CD14-positive monocyte (primary cell): ENCODE measurements at regions of chr19 and their contacts with region 1.

Region 1: GRCh38 chr19:41144403-41144802 is 30.2 kb downstream of the CYP2F1 start:
- DNase-seq: peak; percentile 73 to 82 (median 78)
- H3K4me3 ChIP-seq: no peak overlapping the region
- H3K4me3 Mint-ChIP-seq: no peak overlapping the region
- H3K27ac ChIP-seq: no peak overlapping the region
- H3K27ac Mint-ChIP-seq: no peak overlapping the region
- H3K4me1 ChIP-seq: no peaks in the 10 kb centered on the region
- H3K4me1 Mint-ChIP-seq: peaks cover 2% of the 10 kb centered on the region
- H3K27me3 ChIP-seq: peaks cover 0 to 2% of the 10 kb centered on the region in 2 donors
- H3K27me3 Mint-ChIP-seq: peaks cover 5 to 17% (median 15%) of the 10 kb centered on the region in 3 donors
- CTCF ChIP-seq: peak; percentile 82

Region 2: DNA sequence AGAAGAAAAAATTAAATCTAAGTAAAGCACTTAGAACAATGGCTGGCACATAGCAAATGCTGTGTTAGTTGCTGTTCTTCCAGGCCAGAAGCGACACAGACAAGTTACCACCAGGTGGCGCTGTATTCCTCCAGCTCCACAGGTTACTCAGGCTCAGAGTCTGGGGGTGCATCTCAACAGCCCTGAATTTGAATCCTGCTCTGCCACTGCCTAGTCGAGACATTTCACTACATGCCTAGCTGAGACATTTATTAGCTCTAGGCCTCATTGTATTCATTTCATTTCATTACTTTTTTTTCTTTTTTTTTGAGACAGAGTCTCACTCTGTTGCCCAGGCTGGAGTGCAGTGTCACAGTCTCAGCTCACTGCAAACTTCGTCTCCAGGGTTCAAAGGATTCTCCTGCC is 169.8 kb before region 1 on chr19:
- intact Hi-C with region 1: loop called (anchors 2 to 5 kb)
- DNase-seq: peak; percentile 62 to 73 (median 70)
- H3K4me3 ChIP-seq: no peak overlapping the region
- H3K4me3 Mint-ChIP-seq: no peak overlapping the region
- H3K27ac ChIP-seq: no peak overlapping the region
- H3K27ac Mint-ChIP-seq: no peak overlapping the region
- H3K4me1 ChIP-seq: no peaks in the 10 kb centered on the region
- H3K4me1 Mint-ChIP-seq: no peaks in the 10 kb centered on the region
- H3K27me3 ChIP-seq: no peaks in the 10 kb centered on the region
- H3K27me3 Mint-ChIP-seq: peaks cover 12 to 20% (median 13%) of the 10 kb centered on the region in 3 donors
- CTCF ChIP-seq: peak; percentile 95

Region 3: GRCh38 chr19:41206926-41207750 is 62.7 kb after region 1 on chr19:
- intact Hi-C with region 1: loop called in 1 of 2 experiments (anchors 2 kb)
- DNase-seq: no peak
- H3K4me3 ChIP-seq: no peak overlapping the region
- H3K4me3 Mint-ChIP-seq: no peak overlapping the region
- H3K27ac ChIP-seq: no peak overlapping the region
- H3K27ac Mint-ChIP-seq: peak overlapping the region in 3 of 7 donors; percentile 13 to 21 (median 21)
- H3K4me1 ChIP-seq: no peaks in the 10 kb centered on the region
- H3K4me1 Mint-ChIP-seq: no peaks in the 10 kb centered on the region
- H3K27me3 ChIP-seq: no peaks in the 10 kb centered on the region
- H3K27me3 Mint-ChIP-seq: peaks cover 0 to 6% (median 1%) of the 10 kb centered on the region in 3 donors
- CTCF ChIP-seq: no peak